Activated T-helper 1 cell treated with anti-CD3 and anti-CD28 coated beads, Interleukin-12 subunit alpha, Interleukin-12 subunit beta, Interleukin-2, Interleukin-4 antibody, amounts not matched to agents 30 ng/mL and 10 ng/mL and 1 ng/mL, durations not matched to agents 14 hours and 24 hours and 36 hours (primary cell): ENCODE measurements at regions of chr22 and their contacts with region 1.

Region 1: GRCh38 chr22:35430897-35431322 is 31.0 kb downstream of the MCM5 start:
- DNase-seq: peak; percentile 38
- H3K4me3 Mint-ChIP-seq: no peak overlapping the region
- H3K27ac Mint-ChIP-seq: no peak overlapping the region
- H3K4me1 Mint-ChIP-seq: no peaks in the 10 kb centered on the region
- H3K27me3 Mint-ChIP-seq: no peaks in the 10 kb centered on the region

Region 2: DNA sequence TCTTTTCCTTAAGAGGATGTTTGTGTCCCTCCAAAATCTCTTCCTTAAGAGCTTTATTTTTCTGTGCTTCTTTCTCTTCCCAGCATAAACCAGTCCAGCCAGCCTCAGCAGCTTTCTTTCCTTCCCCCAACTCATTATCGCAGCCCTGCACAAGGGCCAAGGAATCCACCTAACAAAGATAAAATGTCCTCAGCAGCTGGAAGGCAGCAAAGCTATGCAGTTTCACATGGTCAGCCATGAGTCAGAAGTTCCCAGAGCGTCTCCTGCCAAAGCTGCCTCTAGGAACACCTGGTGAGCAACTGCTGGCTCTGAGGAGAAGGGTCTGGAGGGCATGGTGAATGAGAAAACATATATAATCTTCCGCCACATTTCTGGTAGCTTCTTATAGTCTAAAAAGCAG is 218.9 kb before region 1 on chr22:
- intact Hi-C with region 1: no loop called
- DNase-seq: no peak
- H3K4me3 Mint-ChIP-seq: no peak overlapping the region
- H3K27ac Mint-ChIP-seq: no peak overlapping the region
- H3K4me1 Mint-ChIP-seq: no peaks in the 10 kb centered on the region
- H3K27me3 Mint-ChIP-seq: peaks cover 1% of the 10 kb centered on the region

Region 3: DNA sequence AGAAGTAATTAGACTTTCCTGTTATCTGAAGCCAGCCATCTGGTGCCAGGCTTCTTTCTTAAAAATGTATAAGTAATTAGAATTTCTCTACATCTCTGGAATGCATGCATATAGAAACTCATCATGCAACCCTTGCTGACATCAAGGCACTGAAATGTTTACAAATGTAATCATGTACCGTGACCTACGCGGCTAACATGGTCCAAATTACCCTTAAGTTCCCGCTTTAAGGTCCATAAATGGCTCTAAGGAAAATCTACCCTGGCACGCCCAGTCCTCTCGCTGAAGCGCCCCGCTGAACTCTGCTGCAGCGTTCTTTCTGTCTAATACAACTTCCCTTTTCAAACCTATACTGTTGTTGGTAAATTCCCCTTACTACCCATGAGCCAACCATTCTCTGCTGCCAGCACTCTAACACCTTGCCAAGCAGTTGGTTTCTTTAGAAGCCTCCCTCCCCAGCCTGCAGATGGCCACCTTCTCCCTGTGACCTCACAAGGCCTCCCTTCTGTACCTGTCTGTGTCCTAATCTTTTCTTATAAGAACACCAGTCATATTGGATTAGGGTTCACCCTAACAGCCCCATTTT is 63.5 kb before region 1 on chr22:
- intact Hi-C with region 1: no loop called
- DNase-seq: no peak
- H3K4me3 Mint-ChIP-seq: no peak overlapping the region
- H3K27ac Mint-ChIP-seq: no peak overlapping the region
- H3K4me1 Mint-ChIP-seq: peaks cover 10% of the 10 kb centered on the region
- H3K27me3 Mint-ChIP-seq: peaks cover 16% of the 10 kb centered on the region

Region 4: DNA sequence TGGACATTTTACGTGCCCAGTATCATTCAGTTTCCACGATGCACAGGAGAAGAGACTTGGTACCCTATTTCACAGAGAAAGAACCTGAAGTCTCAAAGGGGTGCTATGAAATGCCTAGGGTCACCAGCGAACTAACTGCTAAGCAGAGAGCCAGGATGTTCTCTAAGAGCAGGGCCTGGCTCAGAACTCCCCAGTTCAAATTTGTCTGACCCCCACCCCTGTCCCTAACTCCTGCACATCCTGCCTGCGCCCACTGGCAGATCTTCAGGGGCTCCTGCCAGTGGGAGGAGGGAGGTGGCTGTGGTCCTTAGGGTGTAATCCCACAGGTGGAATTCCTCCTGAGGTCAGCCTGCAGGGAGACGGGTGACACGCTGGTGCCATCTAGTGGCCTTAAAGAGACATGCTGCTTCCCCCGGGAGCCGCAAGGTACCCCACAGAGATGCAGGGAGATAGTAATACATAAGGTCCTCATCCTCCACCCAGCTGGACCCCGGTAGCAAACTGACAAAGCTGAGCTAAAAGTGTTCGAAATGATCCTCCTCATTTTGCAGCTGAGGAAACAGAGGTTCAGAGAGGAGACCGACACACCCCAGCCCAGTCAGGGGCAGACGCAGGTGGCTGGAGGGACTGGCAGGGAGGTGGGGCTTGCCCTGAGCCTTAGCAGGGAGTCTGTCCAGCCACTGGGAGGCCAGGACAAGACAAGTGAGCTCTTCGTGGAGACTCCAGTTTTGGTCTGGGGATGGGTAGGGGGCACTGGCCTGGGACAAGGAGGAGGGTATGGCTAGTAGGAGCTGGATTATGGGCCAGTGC is 152.2 kb after region 1 on chr22:
- intact Hi-C with region 1: loop called (anchors 2 kb)
- DNase-seq: peak; percentile 29
- H3K4me3 Mint-ChIP-seq: no peak overlapping the region
- H3K27ac Mint-ChIP-seq: no peak overlapping the region
- H3K4me1 Mint-ChIP-seq: peaks cover 6% of the 10 kb centered on the region
- H3K27me3 Mint-ChIP-seq: peaks cover 4% of the 10 kb centered on the region